ENCODE measurements at regions of chr13 and their contacts with region 1.

Region 1: GRCh38 chr13:91284335-91284734 is 63.2 kb upstream of the MIR17HG start:
- DNase-seq: no peak
- H3K4me3 ChIP-seq: no peak overlapping the region
- H3K27ac ChIP-seq: no peak overlapping the region
- H3K4me1 ChIP-seq: no peaks in the 10 kb centered on the region
- CTCF ChIP-seq: no peak

Region 2: GRCh38 chr13:90883592-90883991 is 400.7 kb before region 1 on chr13:
- CTCF ChIA-PET with region 1: no interaction called
- POLR2A ChIA-PET with region 1: no interaction called
- intact Hi-C with region 1: no loop called
- DNase-seq: no peak
- H3K4me3 ChIP-seq: no peak overlapping the region
- H3K27ac ChIP-seq: no peak overlapping the region
- H3K4me1 ChIP-seq: no peaks in the 10 kb centered on the region
- CTCF ChIP-seq: peak; percentile 53

Region 3: DNA sequence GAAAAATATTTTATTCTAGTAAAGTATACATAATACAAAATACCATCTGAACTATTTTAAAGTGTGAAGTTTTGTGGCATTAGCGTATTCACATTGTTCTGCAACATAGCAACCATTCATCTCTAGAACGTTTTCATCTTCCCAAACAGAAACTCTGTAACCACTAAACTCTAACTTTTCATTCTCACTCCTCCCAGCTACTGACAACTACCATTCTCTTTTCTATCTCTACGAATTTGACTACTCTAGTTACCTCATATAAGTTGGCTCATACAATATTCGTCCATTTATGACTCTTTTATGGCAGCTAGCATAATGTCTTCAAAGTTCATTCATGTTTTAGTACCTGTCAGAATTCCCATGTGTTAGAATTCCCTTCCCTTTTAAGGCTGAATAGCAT is 87.4 kb before region 1 on chr13:
- CTCF ChIA-PET with region 1: no interaction called
- POLR2A ChIA-PET with region 1: no interaction called
- intact Hi-C with region 1: no loop called
- DNase-seq: no peak
- H3K4me3 ChIP-seq: no peak overlapping the region
- H3K27ac ChIP-seq: no peak overlapping the region
- H3K4me1 ChIP-seq: no peaks in the 10 kb centered on the region
- CTCF ChIP-seq: no peak

Region 4: GRCh38 chr13:91270031-91270430 is 14.3 kb before region 1 on chr13:
- CTCF ChIA-PET with region 1: no interaction called
- POLR2A ChIA-PET with region 1: interaction called, 15 read pairs
- intact Hi-C with region 1: no loop called
- DNase-seq: no peak
- H3K4me3 ChIP-seq: no peak overlapping the region
- H3K27ac ChIP-seq: no peak overlapping the region
- H3K4me1 ChIP-seq: no peaks in the 10 kb centered on the region
- CTCF ChIP-seq: no peak

Measured in OCI-LY7 (cell line).